HepG2 (cell line): ENCODE measurements at regions of chr6 and their contacts with region 1.

Region 1: DNA sequence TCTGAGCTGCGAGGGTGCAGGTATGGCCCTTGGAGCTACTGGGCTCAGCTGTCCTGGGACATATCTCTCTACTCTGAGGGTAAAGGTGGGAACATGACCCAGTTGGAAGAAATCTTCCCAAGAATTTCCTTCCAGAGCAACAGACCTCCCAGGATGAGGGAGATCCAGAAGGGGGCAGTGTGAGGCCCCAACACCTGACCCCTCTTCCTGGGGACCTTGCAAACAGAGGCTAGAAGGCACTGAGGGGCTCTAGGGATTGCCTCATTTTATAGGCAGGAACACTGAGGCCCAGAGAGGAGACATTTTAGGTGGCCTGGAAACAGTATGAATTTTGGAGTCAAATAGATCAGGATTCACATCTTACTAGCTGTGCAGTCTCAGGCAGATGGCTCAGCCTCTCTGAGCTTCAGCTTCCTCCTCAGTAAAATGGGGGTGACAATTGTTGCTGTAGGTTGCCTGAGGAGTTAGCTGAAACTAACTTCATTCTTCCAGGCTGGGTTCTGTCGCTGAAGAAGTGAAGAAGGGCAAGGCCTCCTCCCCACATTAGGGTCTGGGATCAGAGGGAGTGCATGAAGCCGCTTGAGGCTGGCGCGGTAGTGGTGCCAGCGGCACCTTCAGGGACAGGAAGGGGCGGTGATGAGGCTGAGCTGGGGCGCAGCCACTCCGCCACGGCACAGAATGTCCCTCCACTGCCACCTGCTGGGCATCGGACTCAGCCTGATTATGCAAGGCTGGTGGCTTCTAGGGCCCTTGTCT is 11.4 kb downstream of the KCNK17 start:
- DNase-seq: peak; percentile 66
- ATAC-seq: peak; percentile 93
- H3K4me3 ChIP-seq: no peak overlapping the region
- H3K27ac ChIP-seq: no peak overlapping the region
- H3K4me1 ChIP-seq: peaks cover 8% of the 10 kb centered on the region
- H3K27me3 ChIP-seq: 0 out of 5 replicates have a peak, but pooled peaks cover 0 to 9% of the 10 kb centered on the region in 2 experiments
- CTCF ChIP-seq: peak; percentile 98
- EP300 ChIP-seq: no peak
- POLR2A ChIP-seq: no peak
- RAD21 ChIP-seq: peak; percentile 95

Region 2: DNA sequence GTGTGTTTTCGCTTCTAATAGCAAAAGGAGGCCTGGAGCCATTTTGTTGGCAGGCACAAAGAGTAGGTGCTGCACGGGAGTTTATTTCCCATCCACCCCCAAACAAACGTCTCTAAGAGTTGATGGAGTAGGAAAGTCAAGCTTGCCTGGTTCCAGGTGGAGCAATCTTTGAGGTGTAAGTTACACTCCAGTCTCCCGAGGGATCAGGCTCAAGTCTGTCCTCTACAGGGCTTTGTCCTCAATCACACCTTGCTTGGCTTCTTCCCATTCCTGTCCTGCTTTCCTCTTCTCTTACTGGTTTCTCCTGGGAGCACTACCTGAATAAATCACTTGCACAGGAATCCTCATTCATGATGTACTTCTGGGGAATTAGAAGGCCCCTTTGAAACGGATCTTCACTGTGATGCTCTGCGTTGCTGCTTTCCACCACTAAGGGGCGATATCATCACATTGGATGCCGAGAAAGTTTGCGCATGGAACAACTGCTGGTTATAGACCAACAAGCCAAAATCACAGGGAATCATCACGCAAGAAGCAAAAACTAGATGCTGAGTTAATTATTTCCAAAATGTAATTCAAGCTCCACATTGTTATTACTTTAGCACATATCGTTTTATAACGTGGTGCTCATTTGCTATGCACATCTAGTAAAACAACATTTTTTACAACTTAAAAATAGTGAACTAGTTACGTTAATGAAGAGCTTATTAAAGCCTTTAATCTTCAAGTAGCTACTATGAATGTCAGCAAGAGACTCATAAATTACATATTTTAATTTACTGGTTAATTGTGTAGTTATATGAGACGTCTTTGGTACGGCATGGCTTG is 430.9 kb before region 1 on chr6:
- CTCF ChIA-PET with region 1: interaction called, 12 read pairs
- POLR2A ChIA-PET with region 1: no interaction called
- in situ Hi-C with region 1: no loop called
- intact Hi-C with region 1: no loop called
- DNase-seq: peak; percentile 41
- ATAC-seq: peak; percentile 80
- H3K4me3 ChIP-seq: no peak overlapping the region
- H3K27ac ChIP-seq: no peak overlapping the region
- H3K4me1 ChIP-seq: no peaks in the 10 kb centered on the region
- H3K27me3 ChIP-seq: no peaks in the 10 kb centered on the region
- CTCF ChIP-seq: peak; percentile 92
- EP300 ChIP-seq: no peak
- POLR2A ChIP-seq: no peak
- RAD21 ChIP-seq: peak; percentile 69

Region 3: DNA sequence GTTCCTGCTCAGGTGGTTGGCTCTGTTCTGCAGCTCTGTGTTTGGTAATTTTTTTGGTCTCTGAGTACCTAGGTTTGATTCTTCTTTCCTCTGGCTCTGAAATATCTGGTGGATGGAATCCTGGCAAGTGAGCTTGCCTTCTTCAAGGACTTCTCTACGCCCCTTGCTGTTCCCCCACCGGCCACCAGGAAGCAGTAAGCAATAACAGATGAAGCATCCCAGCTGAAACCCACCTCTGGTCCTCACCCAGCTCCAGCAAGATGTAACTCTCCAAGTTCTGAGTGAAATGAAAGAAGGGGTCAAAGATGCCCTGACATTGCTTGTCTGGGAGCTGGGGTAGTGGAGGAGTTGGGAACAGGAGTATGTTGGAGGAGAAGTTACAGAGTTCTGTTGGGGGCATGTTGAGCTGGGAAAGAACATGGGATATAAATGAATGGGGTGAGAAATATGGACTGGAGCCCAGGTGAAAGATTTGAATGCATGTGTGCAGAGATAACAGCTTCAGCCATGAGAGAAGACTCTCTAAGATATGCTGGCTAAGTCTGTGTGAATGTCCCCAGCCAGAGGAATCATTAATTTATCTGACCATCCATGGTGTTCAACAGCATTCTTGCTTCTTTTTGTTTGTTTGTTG is 305.6 kb before region 1 on chr6:
- CTCF ChIA-PET with region 1: interaction called, 6 read pairs
- POLR2A ChIA-PET with region 1: no interaction called
- in situ Hi-C with region 1: loop called (anchors 10 kb)
- intact Hi-C with region 1: loop called (anchors 5 kb)
- DNase-seq: peak; percentile 29
- ATAC-seq: peak; percentile 77
- H3K4me3 ChIP-seq: no peak overlapping the region
- H3K27ac ChIP-seq: no peak overlapping the region
- H3K4me1 ChIP-seq: no peaks in the 10 kb centered on the region
- H3K27me3 ChIP-seq: no peaks in the 10 kb centered on the region; a peak in 1 of 5 replicates
- CTCF ChIP-seq: peak; percentile 66
- EP300 ChIP-seq: no peak
- POLR2A ChIP-seq: no peak
- RAD21 ChIP-seq: 0 out of 2 replicates have a peak, but pooled peaks have one; percentile 37

Region 4: DNA sequence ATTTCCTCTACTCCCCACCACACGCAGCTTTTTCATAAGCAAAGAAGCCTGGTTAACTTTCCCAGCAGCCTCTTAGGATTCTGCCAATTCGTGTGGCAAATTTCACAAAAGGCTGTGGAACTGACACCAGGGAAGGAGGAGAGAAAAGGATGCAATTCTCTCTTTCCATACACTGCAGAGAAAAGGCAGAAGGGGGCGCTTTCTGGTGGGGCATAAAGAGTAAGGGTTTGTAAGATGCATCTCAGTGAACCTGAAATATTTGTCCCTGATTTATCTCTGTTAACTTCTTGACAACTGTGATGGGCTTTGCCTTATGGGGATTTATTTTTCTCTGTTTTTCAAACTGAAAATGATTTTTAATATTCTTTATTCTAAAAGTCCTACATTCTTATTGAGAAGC is 299.8 kb before region 1 on chr6:
- CTCF ChIA-PET with region 1: no interaction called
- POLR2A ChIA-PET with region 1: no interaction called
- in situ Hi-C with region 1: loop called (anchors 10 kb)
- intact Hi-C with region 1: loop called (anchors 5 kb)
- DNase-seq: no peak
- ATAC-seq: no peak
- H3K4me3 ChIP-seq: no peak overlapping the region
- H3K27ac ChIP-seq: no peak overlapping the region
- H3K4me1 ChIP-seq: no peaks in the 10 kb centered on the region
- H3K27me3 ChIP-seq: no peaks in the 10 kb centered on the region; a peak in 1 of 5 replicates
- CTCF ChIP-seq: no peak
- EP300 ChIP-seq: no peak
- POLR2A ChIP-seq: no peak
- RAD21 ChIP-seq: no peak

Region 5: DNA sequence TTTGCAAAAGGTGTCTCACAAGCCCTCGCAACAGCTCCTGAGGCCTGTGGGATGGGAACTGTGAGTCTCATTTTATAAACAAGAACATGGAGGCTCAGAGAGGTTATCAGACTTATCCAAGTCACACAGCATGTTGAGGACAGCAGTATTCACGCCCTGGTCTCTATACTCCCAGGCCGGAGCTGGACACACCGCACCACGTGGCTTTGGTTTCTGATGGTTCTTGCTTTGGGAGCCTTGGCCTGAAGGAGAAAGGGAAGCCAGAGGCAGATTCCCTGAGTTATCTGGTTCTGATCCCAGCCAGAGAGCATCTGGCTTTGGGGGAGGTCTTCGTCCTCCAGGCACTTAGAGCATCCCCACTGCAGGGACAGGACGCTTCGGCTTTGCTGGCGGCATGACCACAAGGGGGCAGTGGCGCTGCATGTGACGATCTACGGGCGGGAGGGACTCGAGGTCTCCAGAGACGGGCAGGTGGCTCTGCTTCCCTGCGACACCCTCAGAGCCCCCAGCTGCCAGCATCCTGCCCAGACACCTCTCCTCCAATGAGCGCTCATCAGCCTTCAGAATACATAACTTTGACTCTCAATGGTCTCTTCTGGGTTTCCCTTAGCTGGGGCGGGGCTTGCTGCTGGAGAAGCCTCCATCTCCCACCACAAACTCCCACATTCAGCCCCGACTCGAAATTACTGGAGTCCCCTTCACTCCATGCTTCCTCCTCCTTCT is 136.5 kb before region 1 on chr6:
- CTCF ChIA-PET with region 1: interaction called, 76 read pairs
- POLR2A ChIA-PET with region 1: no interaction called
- in situ Hi-C with region 1: loop called (anchors 5 kb)
- intact Hi-C with region 1: loop called (anchors 1 kb)
- DNase-seq: peak; percentile 62
- ATAC-seq: peak; percentile 97
- H3K4me3 ChIP-seq: no peak overlapping the region
- H3K27ac ChIP-seq: no peak overlapping the region
- H3K4me1 ChIP-seq: no peaks in the 10 kb centered on the region
- H3K27me3 ChIP-seq: no peaks in the 10 kb centered on the region
- CTCF ChIP-seq: peak; percentile 97
- EP300 ChIP-seq: no peak
- POLR2A ChIP-seq: no peak
- RAD21 ChIP-seq: peak; percentile 93

Region 6: GRCh38 chr6:39189915-39190544 is 112.8 kb before region 1 on chr6:
- CTCF ChIA-PET with region 1: interaction called, 3 read pairs
- POLR2A ChIA-PET with region 1: no interaction called
- in situ Hi-C with region 1: no loop called
- intact Hi-C with region 1: loop called (anchors 1 kb)
- DNase-seq: peak; percentile 40
- ATAC-seq: peak; percentile 98
- H3K4me3 ChIP-seq: no peak overlapping the region
- H3K27ac ChIP-seq: no peak overlapping the region
- H3K4me1 ChIP-seq: no peaks in the 10 kb centered on the region
- H3K27me3 ChIP-seq: no peaks in the 10 kb centered on the region; a peak in 1 of 5 replicates
- CTCF ChIP-seq: peak; percentile 79
- EP300 ChIP-seq: no peak
- POLR2A ChIP-seq: no peak
- RAD21 ChIP-seq: no peak

Region 7: GRCh38 chr6:39361657-39362486 is 59.0 kb after region 1 on chr6:
- CTCF ChIA-PET with region 1: no interaction called
- POLR2A ChIA-PET with region 1: no interaction called
- in situ Hi-C with region 1: no loop called
- intact Hi-C with region 1: no loop called
- DNase-seq: peak; percentile 45
- ATAC-seq: peak; percentile 95
- H3K4me3 ChIP-seq: no peak overlapping the region
- H3K27ac ChIP-seq: no peak overlapping the region
- H3K4me1 ChIP-seq: no peaks in the 10 kb centered on the region
- H3K27me3 ChIP-seq: no peaks in the 10 kb centered on the region
- CTCF ChIP-seq: peak; percentile 92
- EP300 ChIP-seq: no peak
- POLR2A ChIP-seq: no peak
- RAD21 ChIP-seq: peak; percentile 62; the same call in 1 of the 2 replicates

Region 8: GRCh38 chr6:39389484-39389767 is 86.6 kb after region 1 on chr6:
- CTCF ChIA-PET with region 1: no interaction called
- POLR2A ChIA-PET with region 1: no interaction called
- in situ Hi-C with region 1: no loop called
- intact Hi-C with region 1: no loop called
- DNase-seq: no peak
- ATAC-seq: peak; percentile 75
- H3K4me3 ChIP-seq: no peak overlapping the region
- H3K27ac ChIP-seq: no peak overlapping the region
- H3K4me1 ChIP-seq: no peaks in the 10 kb centered on the region
- H3K27me3 ChIP-seq: no peaks in the 10 kb centered on the region; a peak in 1 of 5 replicates
- CTCF ChIP-seq: 0 out of 2 replicates have a peak, but pooled peaks have one; percentile 10
- EP300 ChIP-seq: no peak
- POLR2A ChIP-seq: no peak
- RAD21 ChIP-seq: no peak